Activated T-helper 1 cell treated with anti-CD3 and anti-CD28 coated beads, Interleukin-12 subunit alpha, Interleukin-12 subunit beta, Interleukin-2, Interleukin-4 antibody, amounts not matched to agents 30 ng/mL and 10 ng/mL and 1 ng/mL, durations not matched to agents 14 hours and 24 hours and 36 hours (primary cell): ENCODE measurements at regions of chr3 and their contacts with region 1.

Region 1: GRCh38 chr3:101936419-101937356 is 87.4 kb downstream of the NFKBIZ start:
- DNase-seq: peak; percentile 33
- H3K4me3 Mint-ChIP-seq: peak overlapping the region; percentile 65
- H3K27ac Mint-ChIP-seq: peak overlapping the region; percentile 77
- H3K4me1 Mint-ChIP-seq: peaks cover 33% of the 10 kb centered on the region
- H3K27me3 Mint-ChIP-seq: peaks cover 12% of the 10 kb centered on the region

Region 2: DNA sequence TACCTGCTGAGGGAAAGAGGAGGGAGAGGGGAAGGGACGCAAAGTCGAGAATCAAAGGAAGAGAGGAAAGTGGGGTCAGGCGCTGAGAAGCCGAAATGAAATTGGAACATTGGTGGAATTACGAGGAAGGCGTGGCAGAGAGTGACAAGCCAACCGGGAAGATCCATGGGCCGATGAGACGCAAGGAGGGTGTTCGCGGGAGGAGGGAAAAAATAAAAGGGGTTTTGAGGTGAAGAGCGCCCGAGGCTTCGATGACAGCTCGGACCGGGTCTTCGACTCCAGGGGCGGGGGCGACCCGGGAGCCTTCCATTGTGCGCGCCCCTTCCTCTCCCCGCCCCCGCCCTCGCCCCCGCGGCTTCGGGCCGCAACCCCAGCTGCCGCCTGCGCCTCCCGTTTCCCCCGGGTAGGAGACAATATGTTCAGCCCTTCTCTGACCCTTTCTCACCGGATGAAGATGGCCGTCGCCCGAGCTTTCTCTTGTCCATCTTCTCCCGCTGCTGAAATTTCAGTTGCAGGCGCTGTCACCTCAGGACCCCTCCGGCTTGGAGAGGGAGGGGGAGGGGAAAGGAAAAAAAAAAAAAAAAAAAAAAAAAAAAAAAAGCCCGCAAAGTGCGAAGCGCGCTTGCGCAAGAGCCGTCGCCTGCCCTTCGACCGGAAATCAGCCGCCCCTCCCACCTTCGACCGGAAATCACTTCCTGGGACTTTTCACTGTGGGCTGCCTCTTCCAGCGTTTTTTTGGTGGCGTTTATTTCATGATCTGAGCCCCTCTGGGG is 423.9 kb before region 1 on chr3 and contains the start of gene SENP7:
- intact Hi-C with region 1: loop called (anchors 10 kb)
- DNase-seq: peak; percentile 72
- H3K4me3 Mint-ChIP-seq: peak within 1 kb of the TSS; percentile 94
- H3K27ac Mint-ChIP-seq: peak within 1 kb of the TSS; percentile 95
- H3K4me1 Mint-ChIP-seq: peaks cover 31% of the 10 kb centered on the region
- H3K27me3 Mint-ChIP-seq: no peaks in the 10 kb centered on the region
- total RNA-seq, gene SENP7: 9.1 and 10.7 TPM in 2 replicates

Region 3: DNA sequence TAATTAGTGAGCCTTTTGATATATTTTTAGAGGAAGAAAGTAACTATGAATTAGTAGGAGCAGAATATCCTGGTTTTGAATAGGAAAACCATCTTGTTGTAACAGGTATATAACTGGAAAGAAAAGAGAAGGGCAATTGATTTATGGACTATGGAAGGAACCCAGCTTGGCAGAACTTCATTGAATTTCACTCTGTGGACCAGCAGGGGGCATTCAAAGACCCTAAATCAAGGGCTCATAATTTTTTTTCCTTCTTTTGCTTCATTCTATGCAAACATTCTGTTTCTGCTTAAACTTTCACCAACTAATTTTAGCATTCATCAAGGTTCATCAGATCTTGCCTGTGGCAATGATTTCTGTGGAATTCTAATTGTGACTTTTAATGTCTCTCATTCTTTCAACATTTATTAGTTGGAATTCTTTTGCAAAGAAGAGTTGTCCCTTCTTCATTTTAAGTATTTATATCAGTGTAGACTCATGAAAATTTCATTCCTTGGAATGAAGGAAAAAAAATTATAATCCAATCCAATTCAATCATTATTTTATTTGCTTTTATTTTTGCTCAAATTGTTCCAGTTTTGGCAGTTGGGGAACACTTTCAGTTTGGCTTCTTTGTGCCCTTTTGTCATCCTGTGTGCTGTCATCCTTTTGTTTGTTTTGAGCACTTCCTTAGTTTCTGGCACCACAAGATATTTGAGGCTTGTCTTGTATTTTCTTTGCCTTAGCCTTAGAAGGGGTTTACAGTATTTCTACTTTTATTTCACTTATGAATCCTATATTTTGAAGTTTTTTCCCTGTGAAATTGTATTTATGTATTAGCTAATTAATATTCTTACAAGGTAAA is 127.3 kb before region 1 on chr3:
- intact Hi-C with region 1: loop called (anchors 5 kb)
- DNase-seq: no peak
- H3K4me3 Mint-ChIP-seq: no peak overlapping the region
- H3K27ac Mint-ChIP-seq: peak overlapping the region; percentile 27
- H3K4me1 Mint-ChIP-seq: peaks cover 55% of the 10 kb centered on the region
- H3K27me3 Mint-ChIP-seq: no peaks in the 10 kb centered on the region

Region 4: DNA sequence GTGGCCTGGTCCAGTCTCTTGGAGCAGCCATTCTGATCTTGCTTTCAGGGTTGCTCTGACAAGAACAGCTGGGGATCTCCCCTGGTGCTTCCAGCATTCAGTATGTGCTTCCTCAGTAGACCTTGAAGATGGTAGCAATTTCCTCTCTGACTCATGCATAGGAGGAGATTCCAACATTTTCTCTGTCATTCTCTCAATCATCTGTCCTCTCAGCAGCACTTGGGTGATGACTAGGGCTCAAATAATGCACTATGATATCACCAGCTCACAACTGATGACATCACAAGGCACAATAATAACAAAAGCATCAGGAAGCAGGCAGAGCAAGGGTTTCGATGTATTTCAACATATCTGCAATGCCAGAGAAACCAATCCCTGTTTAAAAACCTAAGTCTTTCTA is 34.6 kb before region 1 on chr3:
- intact Hi-C with region 1: loop called (anchors 5 kb)
- DNase-seq: no peak
- H3K4me3 Mint-ChIP-seq: no peak overlapping the region
- H3K27ac Mint-ChIP-seq: peak overlapping the region; percentile 38
- H3K4me1 Mint-ChIP-seq: peaks cover 18% of the 10 kb centered on the region
- H3K27me3 Mint-ChIP-seq: no peaks in the 10 kb centered on the region

Region 5: DNA sequence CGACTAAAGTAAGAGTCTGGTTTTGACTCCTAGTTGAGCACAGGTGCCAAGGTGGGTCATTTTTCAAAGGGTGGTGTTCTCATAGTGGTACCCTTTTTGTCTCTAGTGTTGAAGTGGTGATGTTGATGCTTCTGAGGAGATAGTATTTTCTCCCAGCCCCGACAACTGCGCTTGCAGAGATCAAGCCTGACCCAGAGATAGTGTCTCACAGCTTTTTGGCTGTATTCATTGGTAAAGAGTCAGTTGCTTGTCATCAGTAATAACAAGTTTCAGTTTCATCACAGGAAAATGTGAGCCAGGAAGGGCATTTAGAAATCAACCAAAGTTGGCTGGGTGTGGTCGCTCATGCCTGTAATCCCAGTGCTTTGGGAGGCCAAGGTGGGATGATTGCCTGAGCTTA is 51.9 kb after region 1 on chr3:
- intact Hi-C with region 1: loop called (anchors 1 kb)
- DNase-seq: no peak
- H3K4me3 Mint-ChIP-seq: no peak overlapping the region
- H3K27ac Mint-ChIP-seq: peak overlapping the region; percentile 47
- H3K4me1 Mint-ChIP-seq: peaks cover 44% of the 10 kb centered on the region
- H3K27me3 Mint-ChIP-seq: peaks cover 11% of the 10 kb centered on the region

Region 6: GRCh38 chr3:102745882-102746281 is 809.2 kb after region 1 on chr3:
- intact Hi-C with region 1: no loop called
- DNase-seq: no peak
- H3K4me3 Mint-ChIP-seq: no peak overlapping the region
- H3K27ac Mint-ChIP-seq: no peak overlapping the region
- H3K4me1 Mint-ChIP-seq: no peaks in the 10 kb centered on the region
- H3K27me3 Mint-ChIP-seq: no peaks in the 10 kb centered on the region